ENCODE measurements at regions of chr1 and their contacts with region 1.

Region 1: GRCh38 chr1:209565759-209566678 is 17.5 kb upstream of the CAMK1G start:
- DNase-seq: peak; percentile 97
- ATAC-seq: peak; percentile 90
- H3K4me3 ChIP-seq: no peak overlapping the region
- H3K27ac ChIP-seq: no peak overlapping the region
- H3K4me1 ChIP-seq: peaks cover 22% of the 10 kb centered on the region
- H3K27me3 ChIP-seq: no peaks in the 10 kb centered on the region
- CTCF ChIP-seq: peak; percentile 96

Region 2: GRCh38 chr1:209490013-209490412 is 76.0 kb before region 1 on chr1:
- CTCF ChIA-PET with region 1: interaction called, 6 read pairs
- POLR2A ChIA-PET with region 1: no interaction called
- intact Hi-C with region 1: loop called (anchors 1 kb)
- DNase-seq: peak; percentile 82
- ATAC-seq: peak; percentile 83
- H3K4me3 ChIP-seq: no peak overlapping the region
- H3K27ac ChIP-seq: no peak overlapping the region
- H3K4me1 ChIP-seq: peaks cover 14% of the 10 kb centered on the region; the same call in 1 of the 2 replicates
- H3K27me3 ChIP-seq: no peaks in the 10 kb centered on the region
- CTCF ChIP-seq: peak; percentile 94